GM12878 (cell line): ENCODE measurements at regions of chr10 and their contacts with region 1.

Region 1: DNA sequence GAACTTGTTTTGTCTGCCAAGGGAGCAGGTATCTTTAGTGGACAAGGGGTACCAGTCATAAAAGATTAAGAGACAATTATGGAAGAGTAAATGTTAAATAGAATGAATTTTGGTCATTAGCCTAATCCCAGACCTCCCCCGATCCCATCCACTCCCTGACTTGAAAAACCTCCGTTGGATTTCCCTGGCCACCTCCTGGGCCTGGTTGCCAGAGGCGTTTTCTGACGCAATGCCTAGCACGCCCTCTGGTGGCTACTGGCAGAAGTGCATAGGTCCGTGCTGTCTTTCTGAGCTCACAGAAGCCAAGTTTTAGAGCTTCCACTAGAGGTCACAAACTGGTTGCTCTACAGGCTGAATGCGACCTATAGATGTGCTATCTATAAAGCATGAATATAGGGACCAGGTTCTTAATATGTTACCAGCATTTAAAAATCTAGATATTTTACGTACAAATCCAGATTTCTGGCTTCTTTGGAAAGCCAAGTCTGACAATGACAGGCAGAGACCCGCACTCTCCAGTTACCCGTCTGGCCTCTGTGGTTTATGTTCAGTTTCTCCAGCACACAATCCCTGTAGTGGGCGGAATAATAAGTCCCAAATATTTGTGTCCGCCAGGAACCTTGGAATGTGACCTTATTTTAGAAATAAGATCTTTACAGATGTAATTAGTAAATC is 39.8 kb downstream of the SPOCK2 start:
- DNase-seq: peak; percentile 81
- ATAC-seq: peak; percentile 98
- H3K4me3 ChIP-seq: no peak overlapping the region
- H3K27ac ChIP-seq: no peak overlapping the region
- H3K4me1 ChIP-seq: peaks cover 3% of the 10 kb centered on the region; the same call in 1 of the 2 replicates
- H3K27me3 ChIP-seq: no peaks in the 10 kb centered on the region
- CTCF ChIP-seq: peak; percentile 99 to 100 (median 99); a peak in 5 of 6 replicates
- EP300 ChIP-seq: no peak
- POLR2A ChIP-seq: no peak
- RAD21 ChIP-seq: peak; percentile 98

Region 2: DNA sequence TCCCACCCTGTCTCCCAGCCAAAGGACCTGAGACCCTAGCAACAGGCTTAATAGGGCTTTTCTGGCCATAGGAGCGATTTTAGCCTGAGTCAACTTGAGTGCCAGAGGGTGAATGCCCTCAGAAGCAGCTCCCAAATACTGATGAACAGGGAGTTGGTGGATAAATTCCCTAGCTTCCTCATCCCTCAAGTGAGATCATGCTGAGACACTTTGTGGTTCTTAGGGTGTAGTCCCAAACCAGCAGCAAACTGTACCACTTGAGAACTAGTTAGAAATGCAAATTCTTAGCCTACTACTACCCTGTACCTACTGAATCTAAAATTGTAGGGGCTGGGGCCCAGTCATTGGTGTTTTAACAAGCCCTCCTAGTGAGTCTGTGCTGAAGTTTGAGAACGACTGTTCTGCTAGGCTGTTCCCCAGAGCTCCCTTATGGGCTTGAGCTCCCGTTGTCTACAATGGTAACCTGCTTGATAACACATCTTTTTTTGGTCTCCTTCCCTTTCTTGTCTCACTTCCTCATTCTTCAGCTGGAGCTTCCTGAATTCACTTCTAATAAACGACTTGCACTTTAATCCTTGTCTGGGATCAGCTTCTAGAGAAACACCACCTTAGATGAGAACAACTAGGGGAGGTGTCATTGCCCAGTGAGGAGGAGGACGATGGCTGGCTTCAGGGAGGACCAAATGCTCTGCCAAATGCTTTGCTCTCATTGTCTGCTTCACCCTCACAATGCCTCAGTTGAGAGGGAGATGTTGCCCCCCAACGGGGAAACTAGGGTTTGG is 670.1 kb before region 1 on chr10:
- CTCF ChIA-PET with region 1: interaction called, 3 read pairs
- POLR2A ChIA-PET with region 1: no interaction called
- RAD21 ChIA-PET with region 1: no interaction called
- SMC1A ChIA-PET with region 1: no interaction called
- in situ Hi-C with region 1: no loop called
- intact Hi-C with region 1: loop called (anchors 5 kb)
- DNase-seq: no peak
- ATAC-seq: no peak
- H3K4me3 ChIP-seq: no peak overlapping the region
- H3K27ac ChIP-seq: peak overlapping the region; percentile 25; the same call in 1 of the 2 replicates
- H3K4me1 ChIP-seq: peaks cover 36% of the 10 kb centered on the region
- H3K27me3 ChIP-seq: no peaks in the 10 kb centered on the region
- CTCF ChIP-seq: no peak
- EP300 ChIP-seq: no peak
- POLR2A ChIP-seq: no peak
- RAD21 ChIP-seq: peak; percentile 15; the same call in 1 of the 2 replicates

Region 3: GRCh38 chr10:71909399-71910083 is 139.0 kb before region 1 on chr10:
- CTCF ChIA-PET with region 1: interaction called, 10 read pairs
- POLR2A ChIA-PET with region 1: no interaction called
- RAD21 ChIA-PET with region 1: interaction called, 9 read pairs
- SMC1A ChIA-PET with region 1: interaction called, 7 read pairs
- in situ Hi-C with region 1: no loop called
- intact Hi-C with region 1: no loop called
- DNase-seq: no peak
- ATAC-seq: peak; percentile 66
- H3K4me3 ChIP-seq: no peak overlapping the region
- H3K27ac ChIP-seq: peak overlapping the region; percentile 52
- H3K4me1 ChIP-seq: peaks cover 13% of the 10 kb centered on the region
- H3K27me3 ChIP-seq: no peaks in the 10 kb centered on the region
- CTCF ChIP-seq: no peak
- EP300 ChIP-seq: no peak
- POLR2A ChIP-seq: no peak
- RAD21 ChIP-seq: no peak

Region 4: DNA sequence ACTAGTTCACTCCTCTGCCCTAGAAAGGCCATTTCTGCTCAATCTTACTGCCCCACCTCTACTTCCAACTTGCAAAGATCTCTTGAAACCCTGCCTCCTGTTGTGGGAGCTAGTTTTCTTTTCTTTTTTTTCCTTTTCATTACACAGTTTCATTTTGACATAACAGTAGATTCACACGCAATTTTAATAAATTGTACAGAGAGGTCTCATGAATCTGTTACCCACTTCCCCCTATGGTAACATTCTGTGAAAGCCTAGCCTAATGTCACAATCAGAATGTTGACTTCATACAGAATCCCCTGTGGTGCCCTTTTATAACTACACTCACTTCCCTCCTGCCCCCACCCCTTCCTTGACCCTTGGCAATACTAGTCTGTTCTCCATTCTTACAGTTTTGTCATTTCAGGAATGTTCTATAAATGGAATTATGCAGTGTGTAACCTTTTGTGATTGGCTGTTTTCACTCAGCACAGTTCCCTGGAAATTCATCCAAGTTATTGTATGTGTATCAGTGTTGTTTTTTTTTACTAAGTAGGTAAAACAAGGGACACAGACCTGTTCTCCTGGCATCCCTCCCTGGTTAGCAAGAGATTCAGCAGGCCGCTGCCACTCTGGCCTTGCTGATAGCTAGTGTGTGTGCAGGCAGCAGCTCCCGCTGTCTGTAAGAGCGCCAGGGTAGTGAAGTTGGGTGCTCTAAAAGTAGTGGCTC is 62.9 kb before region 1 on chr10:
- CTCF ChIA-PET with region 1: interaction called, 15 read pairs
- POLR2A ChIA-PET with region 1: no interaction called
- RAD21 ChIA-PET with region 1: interaction called, 21 read pairs
- SMC1A ChIA-PET with region 1: interaction called, 17 read pairs
- in situ Hi-C with region 1: no loop called
- intact Hi-C with region 1: no loop called
- DNase-seq: peak; percentile 73
- ATAC-seq: peak; percentile 83
- H3K4me3 ChIP-seq: no peak overlapping the region
- H3K27ac ChIP-seq: peak overlapping the region; percentile 88
- H3K4me1 ChIP-seq: peaks cover 40% of the 10 kb centered on the region
- H3K27me3 ChIP-seq: no peaks in the 10 kb centered on the region
- CTCF ChIP-seq: no peak
- EP300 ChIP-seq: 0 out of 4 replicates have a peak, but pooled peaks have one; percentile 41 to 55
- POLR2A ChIP-seq: no peak
- RAD21 ChIP-seq: no peak

Region 5: GRCh38 chr10:72079356-72079755 is 30.8 kb after region 1 on chr10:
- CTCF ChIA-PET with region 1: interaction called, 16 read pairs
- POLR2A ChIA-PET with region 1: no interaction called
- RAD21 ChIA-PET with region 1: interaction called, 8 read pairs
- SMC1A ChIA-PET with region 1: no interaction called
- in situ Hi-C with region 1: no loop called
- intact Hi-C with region 1: no loop called
- DNase-seq: no peak
- ATAC-seq: peak; percentile 40
- H3K4me3 ChIP-seq: no peak overlapping the region
- H3K27ac ChIP-seq: no peak overlapping the region
- H3K4me1 ChIP-seq: peaks cover 21% of the 10 kb centered on the region
- H3K27me3 ChIP-seq: no peaks in the 10 kb centered on the region
- CTCF ChIP-seq: no peak
- EP300 ChIP-seq: no peak
- POLR2A ChIP-seq: no peak
- RAD21 ChIP-seq: no peak

Region 6: GRCh38 chr10:72215652-72216549 is 167.3 kb after region 1 on chr10 and contains the starts of genes ANAPC16 and ASCC1:
- CTCF ChIA-PET with region 1: interaction called, 64 read pairs
- POLR2A ChIA-PET with region 1: interaction called, 5 read pairs
- RAD21 ChIA-PET with region 1: interaction called, 86 read pairs
- SMC1A ChIA-PET with region 1: interaction called, 39 read pairs
- in situ Hi-C with region 1: loop called (anchors 5 kb)
- intact Hi-C with region 1: loop called (anchors 2 kb)
- DNase-seq: peak; percentile 84
- ATAC-seq: peak; percentile 90
- H3K4me3 ChIP-seq: peak within 1 kb of the TSS; percentile 89
- H3K27ac ChIP-seq: peak within 1 kb of the TSS; percentile 91
- H3K4me1 ChIP-seq: peaks cover 29% of the 10 kb centered on the region
- H3K27me3 ChIP-seq: no peaks in the 10 kb centered on the region
- CTCF ChIP-seq: no peak
- EP300 ChIP-seq: no peak
- POLR2A ChIP-seq: peak; percentile 97
- RAD21 ChIP-seq: no peak
- polyA plus RNA-seq, gene ANAPC16: 178 to 208 TPM
- polyA plus RNA-seq, gene ASCC1: 41.6 to 49.9 TPM

Region 7: DNA sequence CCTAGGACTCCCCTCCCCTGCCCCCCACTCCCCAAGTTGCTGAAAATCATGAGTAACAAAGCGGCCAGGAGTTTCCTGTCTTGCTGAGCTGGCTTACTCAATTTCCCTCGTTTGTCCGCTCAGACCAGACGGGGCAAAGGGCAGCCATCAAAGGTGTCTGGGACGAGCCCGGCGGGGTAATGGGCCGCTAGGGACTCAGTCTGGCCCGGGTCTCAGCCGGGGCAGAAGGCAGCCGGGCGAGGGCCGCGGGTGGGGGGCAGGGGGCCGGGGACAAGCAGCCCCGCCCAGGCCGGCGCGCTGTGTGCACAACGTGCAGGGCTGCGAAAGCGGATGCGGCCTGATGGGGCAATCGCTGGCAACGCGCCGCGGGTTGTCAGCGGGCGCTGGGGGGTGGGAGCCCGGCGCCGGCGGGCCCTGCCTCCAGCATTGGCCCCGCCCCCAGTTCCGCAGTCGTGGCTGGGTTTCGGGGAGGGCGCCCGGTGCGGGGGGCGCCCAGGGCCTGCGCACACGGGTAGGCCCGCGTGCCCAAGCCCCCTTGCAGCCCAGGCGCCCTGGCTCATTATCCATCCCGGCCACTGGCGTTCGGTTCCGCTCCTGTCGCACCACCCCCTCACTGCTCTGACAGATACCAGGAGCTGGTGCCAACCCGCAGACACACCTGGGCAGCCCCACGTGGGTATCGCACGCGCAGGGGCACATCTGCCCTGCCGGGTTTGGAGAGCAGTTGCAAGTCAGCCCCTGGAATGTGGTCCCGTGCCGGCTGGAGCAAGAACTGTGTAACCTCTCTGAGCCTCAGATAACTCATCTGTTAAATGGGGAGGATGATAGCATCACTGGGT is 271.0 kb after region 1 on chr10:
- CTCF ChIA-PET with region 1: interaction called, 4 read pairs
- POLR2A ChIA-PET with region 1: no interaction called
- RAD21 ChIA-PET with region 1: interaction called, 14 read pairs
- SMC1A ChIA-PET with region 1: interaction called, 3 read pairs
- in situ Hi-C with region 1: no loop called
- intact Hi-C with region 1: no loop called
- DNase-seq: no peak
- ATAC-seq: peak; percentile 81
- H3K4me3 ChIP-seq: peak overlapping the region; percentile 76
- H3K27ac ChIP-seq: peak overlapping the region; percentile 89
- H3K4me1 ChIP-seq: peaks cover 59% of the 10 kb centered on the region
- H3K27me3 ChIP-seq: no peaks in the 10 kb centered on the region
- CTCF ChIP-seq: no peak
- EP300 ChIP-seq: 0 out of 4 replicates have a peak, but pooled peaks of 1 of the 2 experiments have one; percentile 59
- POLR2A ChIP-seq: peak; percentile 84
- RAD21 ChIP-seq: no peak

Region 8: GRCh38 chr10:73015779-73016420 is 967.3 kb after region 1 on chr10:
- CTCF ChIA-PET with region 1: no interaction called
- POLR2A ChIA-PET with region 1: no interaction called
- RAD21 ChIA-PET with region 1: no interaction called
- SMC1A ChIA-PET with region 1: no interaction called
- in situ Hi-C with region 1: no loop called
- intact Hi-C with region 1: no loop called
- DNase-seq: no peak
- ATAC-seq: no peak
- H3K4me3 ChIP-seq: no peak overlapping the region
- H3K27ac ChIP-seq: no peak overlapping the region
- H3K4me1 ChIP-seq: no peaks in the 10 kb centered on the region
- H3K27me3 ChIP-seq: no peaks in the 10 kb centered on the region
- CTCF ChIP-seq: no peak
- EP300 ChIP-seq: no peak
- POLR2A ChIP-seq: no peak
- RAD21 ChIP-seq: no peak